ENCODE measurements at regions of chrX and their contacts with region 1.

Region 1: GRCh38 chrX:33434256-33435092 is 223.1 kb upstream of the DMD start:
- DNase-seq: peak; percentile 19
- H3K4me3 ChIP-seq: no peak overlapping the region
- H3K27ac ChIP-seq: no peak overlapping the region
- H3K4me1 ChIP-seq: no peaks in the 10 kb centered on the region
- H3K27me3 ChIP-seq: no peaks in the 10 kb centered on the region
- CTCF ChIP-seq: peak in 3 of 4 experiments; percentile 44 to 55 (median 54)
- POLR2A ChIP-seq: no peak

Region 2: GRCh38 chrX:33357606-33358005 is 76.9 kb before region 1 on chrX:
- intact Hi-C with region 1: no loop called
- DNase-seq: no peak
- H3K4me3 ChIP-seq: no peak overlapping the region
- H3K27ac ChIP-seq: no peak overlapping the region
- H3K4me1 ChIP-seq: no peaks in the 10 kb centered on the region
- H3K27me3 ChIP-seq: no peaks in the 10 kb centered on the region
- CTCF ChIP-seq: no peak
- POLR2A ChIP-seq: no peak

Region 3: DNA sequence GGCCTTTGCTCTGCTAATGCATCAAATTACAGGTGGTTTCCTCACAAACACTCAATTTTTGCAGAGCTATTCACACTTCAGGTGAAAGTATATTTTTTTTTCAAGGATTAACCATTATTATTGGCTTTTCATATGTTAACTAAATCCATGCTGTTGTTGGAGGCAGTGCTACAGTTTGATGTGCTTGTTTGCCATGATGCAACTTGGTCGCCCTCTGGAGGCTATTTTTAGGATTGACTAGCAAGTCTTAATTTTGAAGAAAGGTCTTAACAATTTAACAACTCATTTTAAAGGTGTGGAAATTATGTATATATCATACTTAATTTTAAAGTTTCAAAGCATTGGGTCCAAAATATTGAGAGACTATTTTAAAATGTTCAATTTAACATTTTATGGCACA is 866.4 kb after region 1 on chrX:
- intact Hi-C with region 1: loop called (anchors 10 kb)
- DNase-seq: peak; percentile 3
- H3K4me3 ChIP-seq: no peak overlapping the region
- H3K27ac ChIP-seq: no peak overlapping the region
- H3K4me1 ChIP-seq: no peaks in the 10 kb centered on the region
- H3K27me3 ChIP-seq: no peaks in the 10 kb centered on the region
- CTCF ChIP-seq: peak in 3 of 4 experiments; percentile 13 to 32 (median 15)
- POLR2A ChIP-seq: no peak

Measured in prostate gland (tissue), 2 donors.